GM23248 (cell line): ENCODE measurements at regions of chr2 and their contacts with region 1.

Region 1: DNA sequence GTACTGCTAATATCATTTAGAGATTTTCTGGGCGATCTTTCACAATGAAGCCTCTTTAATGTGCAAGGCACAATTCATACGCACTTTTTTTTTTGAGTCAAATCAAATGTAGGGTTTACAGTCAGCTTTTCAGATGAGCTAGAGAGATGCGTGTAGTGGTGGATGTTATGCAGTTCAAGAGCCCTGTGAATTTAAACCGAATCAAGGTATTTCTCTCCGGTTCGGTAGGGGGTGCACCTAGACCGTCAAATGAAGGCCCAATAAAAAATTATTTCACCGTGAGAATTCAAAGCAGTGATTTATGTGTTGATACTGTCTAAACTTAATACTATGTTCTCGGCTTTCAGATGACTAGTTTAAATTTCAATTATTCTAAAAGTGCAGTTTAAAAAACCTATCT is 1.1 kb downstream of the PTH2R start:
- DNase-seq: peak; percentile 21
- H3K4me3 ChIP-seq: no peak overlapping the region
- H3K27ac ChIP-seq: no peak overlapping the region
- H3K4me1 ChIP-seq: no peaks in the 10 kb centered on the region
- H3K27me3 ChIP-seq: peaks cover 60% of the 10 kb centered on the region

Region 2: GRCh38 chr2:209322041-209322440 is 914.4 kb after region 1 on chr2:
- in situ Hi-C with region 1: loop called (anchors 25 kb)
- DNase-seq: no peak
- H3K4me3 ChIP-seq: no peak overlapping the region
- H3K27ac ChIP-seq: no peak overlapping the region
- H3K4me1 ChIP-seq: 0 out of 2 replicates have a peak, but pooled peaks cover 3% of the 10 kb centered on the region
- H3K27me3 ChIP-seq: peaks cover 10% of the 10 kb centered on the region; the same call in 1 of the 2 replicates

Region 3: GRCh38 chr2:209960676-209961630 is 1553.3 kb after region 1 on chr2:
- in situ Hi-C with region 1: loop called (anchors 25 kb)
- DNase-seq: peak; percentile 73
- H3K4me3 ChIP-seq: no peak overlapping the region
- H3K27ac ChIP-seq: no peak overlapping the region
- H3K4me1 ChIP-seq: no peaks in the 10 kb centered on the region
- H3K27me3 ChIP-seq: no peaks in the 10 kb centered on the region